CD4-positive, alpha-beta T cell (primary cell): ENCODE measurements at regions of chr9 and their contacts with region 1.

Region 1: GRCh38 chr9:71683598-71684235 is 84.6 kb downstream of the CEMIP2 start:
- DNase-seq: peak in 3 of 14 experiments; percentile 29 to 61 (median 46)
- ATAC-seq: no peak
- H3K4me3 ChIP-seq: no peak overlapping the region
- H3K4me3 Mint-ChIP-seq: peak overlapping the region; percentile 42
- H3K27ac ChIP-seq: no peak overlapping the region
- H3K27ac Mint-ChIP-seq: peak overlapping the region; percentile 48
- H3K4me1 ChIP-seq: peaks cover 39% of the 10 kb centered on the region
- H3K4me1 Mint-ChIP-seq: peaks cover 67% of the 10 kb centered on the region
- H3K27me3 ChIP-seq: no peaks in the 10 kb centered on the region
- H3K27me3 Mint-ChIP-seq: no peaks in the 10 kb centered on the region
- CTCF ChIP-seq: no peak

Region 2: GRCh38 chr9:70419546-70420266 is 1264.0 kb before region 1 on chr9:
- CTCF ChIA-PET with region 1: no interaction called
- POLR2A ChIA-PET with region 1: no interaction called
- intact Hi-C with region 1: loop called in 1 of 2 experiments (anchors 10 kb)
- DNase-seq: peak; percentile 77 to 94 (median 85)
- ATAC-seq: peak; percentile 55
- H3K4me3 ChIP-seq: peak overlapping the region; percentile 70
- H3K4me3 Mint-ChIP-seq: peak overlapping the region; percentile 97
- H3K27ac ChIP-seq: peak overlapping the region; percentile 94 to 98
- H3K27ac Mint-ChIP-seq: peak overlapping the region; percentile 100
- H3K4me1 ChIP-seq: peaks cover 49% of the 10 kb centered on the region
- H3K4me1 Mint-ChIP-seq: peaks cover 55% of the 10 kb centered on the region
- H3K27me3 ChIP-seq: no peaks in the 10 kb centered on the region
- H3K27me3 Mint-ChIP-seq: no peaks in the 10 kb centered on the region
- CTCF ChIP-seq: no peak

Region 3: DNA sequence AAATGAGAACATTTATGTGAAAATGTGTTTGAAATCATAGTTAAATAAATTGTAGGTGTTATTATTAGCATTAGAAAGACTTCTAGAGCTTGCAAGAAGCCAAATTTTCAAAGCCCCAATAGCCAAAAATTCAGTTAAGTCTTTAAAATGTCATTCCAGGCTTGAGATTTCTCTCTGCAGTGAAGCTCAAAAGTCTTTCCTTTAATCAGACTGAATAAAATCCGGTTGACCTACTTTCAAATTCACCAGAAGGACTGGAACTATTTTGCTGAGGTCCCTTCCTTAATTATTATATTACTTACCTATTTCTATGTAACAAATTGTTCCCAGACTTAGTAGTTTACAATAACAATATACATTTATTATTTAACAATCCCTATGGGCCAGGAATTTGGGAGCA is 450.1 kb before region 1 on chr9:
- CTCF ChIA-PET with region 1: no interaction called
- POLR2A ChIA-PET with region 1: no interaction called
- intact Hi-C with region 1: no loop called
- DNase-seq: no peak
- ATAC-seq: no peak
- H3K4me3 ChIP-seq: no peak overlapping the region
- H3K4me3 Mint-ChIP-seq: no peak overlapping the region
- H3K27ac ChIP-seq: no peak overlapping the region
- H3K27ac Mint-ChIP-seq: no peak overlapping the region
- H3K4me1 ChIP-seq: no peaks in the 10 kb centered on the region
- H3K4me1 Mint-ChIP-seq: no peaks in the 10 kb centered on the region
- H3K27me3 ChIP-seq: no peaks in the 10 kb centered on the region
- H3K27me3 Mint-ChIP-seq: no peaks in the 10 kb centered on the region
- CTCF ChIP-seq: no peak

Region 4: GRCh38 chr9:71737455-71737854 is 53.7 kb after region 1 on chr9:
- CTCF ChIA-PET with region 1: no interaction called
- POLR2A ChIA-PET with region 1: no interaction called
- intact Hi-C with region 1: no loop called
- DNase-seq: no peak
- ATAC-seq: no peak
- H3K4me3 ChIP-seq: no peak overlapping the region
- H3K4me3 Mint-ChIP-seq: no peak overlapping the region
- H3K27ac ChIP-seq: no peak overlapping the region
- H3K27ac Mint-ChIP-seq: no peak overlapping the region
- H3K4me1 ChIP-seq: no peaks in the 10 kb centered on the region
- H3K4me1 Mint-ChIP-seq: peaks cover 18% of the 10 kb centered on the region
- H3K27me3 ChIP-seq: no peaks in the 10 kb centered on the region
- H3K27me3 Mint-ChIP-seq: no peaks in the 10 kb centered on the region
- CTCF ChIP-seq: no peak

Region 5: GRCh38 chr9:71748280-71748743 is 64.6 kb after region 1 on chr9:
- CTCF ChIA-PET with region 1: no interaction called
- POLR2A ChIA-PET with region 1: interaction called, 3 read pairs
- intact Hi-C with region 1: loop called in 1 of 2 experiments (anchors 5 kb)
- DNase-seq: no peak
- ATAC-seq: no peak
- H3K4me3 ChIP-seq: no peak overlapping the region
- H3K4me3 Mint-ChIP-seq: no peak overlapping the region
- H3K27ac ChIP-seq: peak overlapping the region in 1 of 2 donors; percentile 1
- H3K27ac Mint-ChIP-seq: peak overlapping the region; percentile 28
- H3K4me1 ChIP-seq: peaks cover 4% of the 10 kb centered on the region
- H3K4me1 Mint-ChIP-seq: peaks cover 58% of the 10 kb centered on the region
- H3K27me3 ChIP-seq: no peaks in the 10 kb centered on the region
- H3K27me3 Mint-ChIP-seq: no peaks in the 10 kb centered on the region
- CTCF ChIP-seq: no peak